Left ventricle myocardium inferior (tissue), 1 donor: ENCODE measurements at regions of chr19 and their contacts with region 1.

Region 1: GRCh38 chr19:10580979-10581631 is 6.0 kb downstream of the AP1M2 start:
- DNase-seq: peak; percentile 85
- H3K4me3 ChIP-seq: peak overlapping the region; percentile 45
- H3K27ac ChIP-seq: no peak overlapping the region
- H3K4me1 ChIP-seq: peaks cover 6% of the 10 kb centered on the region
- H3K27me3 ChIP-seq: peaks cover 6% of the 10 kb centered on the region
- CTCF ChIP-seq: peak; percentile 99

Region 2: DNA sequence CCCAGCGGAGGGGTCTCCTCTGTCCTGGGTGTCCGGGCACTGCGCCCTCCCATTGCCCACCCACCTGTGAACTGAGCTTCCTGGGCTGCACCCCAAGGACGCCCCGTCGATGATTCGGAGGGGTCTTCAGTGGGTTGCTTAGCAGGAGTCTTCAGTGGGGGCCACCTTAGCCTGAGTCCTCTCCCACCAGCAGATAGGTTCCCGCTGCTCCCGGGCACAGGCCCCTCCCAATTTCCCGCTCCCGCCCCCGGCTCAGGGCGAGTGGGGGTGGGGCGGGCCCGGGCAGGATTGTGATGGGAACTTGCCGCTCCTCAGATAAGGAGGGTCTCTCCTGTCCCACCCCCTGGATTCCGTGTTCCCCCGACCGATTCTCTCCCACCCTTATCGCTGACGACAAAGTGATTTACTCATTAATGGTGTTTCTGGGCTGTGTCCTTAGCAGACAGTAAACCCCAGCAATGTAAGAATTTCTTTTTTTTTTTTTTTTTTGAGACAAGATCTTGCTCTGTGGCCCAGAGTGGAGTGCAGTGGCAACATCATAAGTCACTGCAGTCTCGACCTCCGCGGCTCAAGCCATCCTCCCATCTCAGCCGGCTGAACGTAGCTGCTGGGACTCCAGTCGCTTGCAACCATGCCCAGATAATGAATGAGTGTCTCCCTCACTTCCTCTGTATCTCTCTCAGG is 63.2 kb before region 1 on chr19:
- intact Hi-C with region 1: no loop called
- DNase-seq: no peak
- H3K4me3 ChIP-seq: peak overlapping the region; percentile 62
- H3K27ac ChIP-seq: no peak overlapping the region
- H3K4me1 ChIP-seq: peaks cover 36% of the 10 kb centered on the region
- H3K27me3 ChIP-seq: peaks cover 90% of the 10 kb centered on the region
- CTCF ChIP-seq: no peak

Region 3: GRCh38 chr19:10533646-10534386 is 47.3 kb before region 1 on chr19:
- intact Hi-C with region 1: no loop called
- DNase-seq: no peak
- H3K4me3 ChIP-seq: no peak overlapping the region
- H3K27ac ChIP-seq: peak overlapping the region; percentile 76
- H3K4me1 ChIP-seq: peaks cover 2% of the 10 kb centered on the region
- H3K27me3 ChIP-seq: peaks cover 7% of the 10 kb centered on the region
- CTCF ChIP-seq: no peak

Region 4: DNA sequence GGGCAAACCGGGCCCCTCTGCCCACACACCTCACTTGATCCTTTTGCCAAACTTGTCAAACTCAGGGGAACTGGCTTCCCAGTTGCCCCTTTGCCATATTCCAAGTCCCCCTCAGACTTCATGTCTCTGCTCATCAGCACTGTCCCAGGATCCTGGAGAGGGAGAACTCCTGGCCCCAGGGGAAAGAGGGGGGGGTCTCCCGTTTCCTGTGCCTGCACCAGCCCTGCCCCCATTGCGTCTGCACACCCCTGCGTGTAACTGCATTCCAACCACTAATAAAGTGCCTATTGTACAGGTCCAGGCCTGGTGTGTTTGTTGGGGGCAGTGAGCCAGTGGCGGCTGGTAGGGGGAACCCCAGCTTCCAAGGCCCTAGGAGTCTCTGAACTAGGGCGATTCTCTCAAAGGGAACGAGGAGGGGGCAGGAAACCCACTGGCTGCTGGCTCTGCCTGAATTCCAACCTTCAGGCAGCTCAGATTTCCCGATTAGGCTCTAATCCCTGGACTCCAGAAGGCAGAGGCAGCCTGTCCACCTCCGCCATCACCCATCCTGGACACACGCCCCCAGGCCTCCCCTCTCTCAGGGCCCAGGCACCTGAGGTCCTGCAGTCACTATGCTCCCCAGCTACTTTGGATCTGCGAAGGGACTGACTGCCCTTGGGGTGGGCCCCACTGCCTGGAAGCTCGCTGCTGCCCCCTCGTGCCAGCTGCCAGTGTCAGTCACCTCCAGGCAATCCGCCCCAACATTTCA is 63.3 kb after region 1 on chr19:
- intact Hi-C with region 1: loop called (anchors 5 kb)
- DNase-seq: peak; percentile 84
- H3K4me3 ChIP-seq: no peak overlapping the region
- H3K27ac ChIP-seq: peak overlapping the region; percentile 72
- H3K4me1 ChIP-seq: peaks cover 39% of the 10 kb centered on the region
- H3K27me3 ChIP-seq: no peaks in the 10 kb centered on the region
- CTCF ChIP-seq: peak; percentile 90

Region 5: GRCh38 chr19:10686661-10687517 is 105.8 kb after region 1 on chr19:
- intact Hi-C with region 1: no loop called
- DNase-seq: peak; percentile 73
- H3K4me3 ChIP-seq: no peak overlapping the region
- H3K27ac ChIP-seq: peak overlapping the region; percentile 45
- H3K4me1 ChIP-seq: peaks cover 37% of the 10 kb centered on the region
- H3K27me3 ChIP-seq: no peaks in the 10 kb centered on the region
- CTCF ChIP-seq: no peak